Right cardiac atrium (tissue), 5 donors: ENCODE measurements at regions of chr7 and their contacts with region 1.

Region 1: DNA sequence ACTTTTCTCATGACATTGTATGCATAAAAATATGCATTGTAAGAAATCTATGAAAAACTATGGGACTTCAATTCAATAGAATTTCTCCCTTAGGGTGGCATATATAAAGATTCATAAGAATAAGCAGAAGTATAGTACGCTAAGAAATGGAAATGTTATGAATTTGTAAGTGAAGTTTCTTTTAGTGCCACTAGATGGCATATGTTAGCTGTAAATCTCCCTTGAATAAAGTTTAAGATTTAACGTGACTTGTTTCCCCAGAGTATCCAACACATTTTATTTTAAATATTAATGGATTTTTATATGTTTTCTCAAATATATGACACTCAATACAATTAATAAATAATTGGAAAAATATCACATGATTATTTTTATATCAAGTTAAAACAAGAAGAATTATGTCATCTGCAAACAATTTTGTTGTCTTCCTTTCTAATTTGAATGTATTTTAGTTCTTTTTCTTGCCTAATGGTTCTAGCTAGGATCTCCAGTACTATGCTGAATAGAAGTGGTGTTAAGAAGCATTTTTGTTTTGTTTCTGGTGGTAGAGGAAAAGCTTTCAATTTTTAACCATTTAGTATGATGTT is 287.2 kb downstream of the HGF start:
- DNase-seq: no peak
- ATAC-seq: no peak
- H3K4me3 ChIP-seq: no peak overlapping the region
- H3K27ac ChIP-seq: no peak overlapping the region
- H3K4me1 ChIP-seq: peaks cover 5% of the 10 kb centered on the region
- H3K27me3 ChIP-seq: no peaks in the 10 kb centered on the region

Region 2: DNA sequence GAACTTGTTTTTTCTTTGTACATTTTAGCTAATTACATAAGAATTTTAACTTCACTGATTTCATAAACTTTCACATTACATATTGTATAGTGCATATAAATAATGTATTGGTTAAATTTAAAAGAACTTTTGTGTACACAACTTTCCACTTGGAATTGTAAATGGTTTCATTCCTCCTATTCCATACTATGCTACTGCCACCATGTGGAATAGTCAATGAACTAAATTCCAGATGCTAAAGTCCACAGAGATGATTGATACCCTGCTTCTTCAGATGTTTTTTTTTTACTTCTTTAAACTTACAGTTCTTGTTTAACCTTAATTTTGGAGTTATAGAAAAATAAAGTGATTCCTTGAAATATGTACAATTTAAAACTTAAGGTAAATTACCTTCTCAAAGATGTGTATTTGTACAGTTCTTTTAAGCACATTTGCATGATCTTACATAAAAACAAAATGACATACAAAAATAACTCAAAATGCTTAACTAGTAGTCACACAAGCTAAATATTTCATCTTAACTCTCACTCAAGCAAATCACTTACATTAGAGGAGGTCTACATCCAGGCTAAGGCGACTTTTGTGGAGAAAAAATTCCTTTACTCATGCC is 534.7 kb after region 1 on chr7:
- intact Hi-C with region 1: loop called in 1 of 4 experiments (anchors 10 kb)
- DNase-seq: no peak
- ATAC-seq: no peak
- H3K4me3 ChIP-seq: no peak overlapping the region
- H3K27ac ChIP-seq: no peak overlapping the region
- H3K4me1 ChIP-seq: peaks cover 2% of the 10 kb centered on the region
- H3K27me3 ChIP-seq: no peaks in the 10 kb centered on the region